ENCODE measurements at regions of chr12 and their contacts with region 1.

Region 1: GRCh38 chr12:121888478-121889266 is at the start of gene PSMD9:
- DNase-seq: peak; percentile 99
- H3K4me3 ChIP-seq: peak within 1 kb of the TSS; percentile 91
- H3K27ac ChIP-seq: peak within 1 kb of the TSS; percentile 98
- H3K4me1 ChIP-seq: peaks cover 4% of the 10 kb centered on the region
- H3K27me3 ChIP-seq: no peaks in the 10 kb centered on the region
- CTCF ChIP-seq: peak; percentile 48
- total RNA-seq, gene PSMD9: 46.1 to 68.3 TPM

Region 2: GRCh38 chr12:121175383-121176227 is 713.1 kb before region 1 on chr12:
- intact Hi-C with region 1: no loop called
- DNase-seq: no peak
- H3K4me3 ChIP-seq: no peak overlapping the region
- H3K27ac ChIP-seq: no peak overlapping the region
- H3K4me1 ChIP-seq: no peaks in the 10 kb centered on the region
- H3K27me3 ChIP-seq: no peaks in the 10 kb centered on the region
- CTCF ChIP-seq: no peak

Region 3: DNA sequence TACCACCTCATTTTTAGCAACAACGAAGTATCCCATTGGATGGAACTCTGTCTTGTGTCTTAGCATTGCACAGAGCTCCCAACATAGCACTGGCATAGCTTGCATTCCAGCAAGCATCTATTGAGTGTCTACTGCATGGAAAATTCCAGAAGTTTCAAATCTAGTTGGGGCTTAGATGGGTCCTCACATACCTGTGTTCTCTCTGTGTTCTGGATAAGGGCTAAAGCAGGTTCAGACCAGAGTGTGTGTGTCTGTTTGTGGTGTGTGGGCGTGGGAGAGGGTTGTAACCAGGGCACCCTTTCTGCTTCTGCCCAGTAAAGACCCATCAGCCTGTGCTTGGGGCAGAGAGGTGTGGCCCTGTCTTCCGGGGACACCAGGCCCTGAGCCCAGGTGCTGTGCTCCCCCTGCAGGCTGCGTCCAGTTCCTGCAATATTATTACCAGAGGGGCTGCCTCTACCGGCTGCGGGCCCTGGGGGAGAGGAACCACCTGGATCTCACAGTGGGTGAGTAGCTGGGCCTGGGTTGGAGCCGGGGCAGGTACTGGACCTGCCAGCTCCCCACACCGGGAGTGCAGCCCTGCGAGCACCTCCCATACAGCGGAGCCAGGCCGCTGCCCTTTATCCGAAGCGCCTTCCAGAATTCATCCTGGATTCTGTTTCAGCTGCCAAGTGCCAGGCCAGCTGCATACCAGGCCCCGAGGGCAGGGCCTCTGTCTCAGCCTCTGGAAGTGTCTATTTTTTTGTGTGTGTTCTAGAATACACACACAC is 115.5 kb before region 1 on chr12:
- intact Hi-C with region 1: no loop called
- DNase-seq: peak; percentile 76
- H3K4me3 ChIP-seq: no peak overlapping the region
- H3K27ac ChIP-seq: no peak overlapping the region
- H3K4me1 ChIP-seq: peaks cover 4% of the 10 kb centered on the region
- H3K27me3 ChIP-seq: no peaks in the 10 kb centered on the region
- CTCF ChIP-seq: peak; percentile 85

Region 4: GRCh38 chr12:121793838-121794533 is 94.7 kb before region 1 on chr12:
- intact Hi-C with region 1: loop called (anchors 5 kb)
- DNase-seq: peak; percentile 95
- H3K4me3 ChIP-seq: peak overlapping the region; percentile 70
- H3K27ac ChIP-seq: peak overlapping the region; percentile 78
- H3K4me1 ChIP-seq: peaks cover 38% of the 10 kb centered on the region
- H3K27me3 ChIP-seq: no peaks in the 10 kb centered on the region
- CTCF ChIP-seq: peak; percentile 99